ENCODE measurements at regions of chr17 and their contacts with region 1.

Region 1: DNA sequence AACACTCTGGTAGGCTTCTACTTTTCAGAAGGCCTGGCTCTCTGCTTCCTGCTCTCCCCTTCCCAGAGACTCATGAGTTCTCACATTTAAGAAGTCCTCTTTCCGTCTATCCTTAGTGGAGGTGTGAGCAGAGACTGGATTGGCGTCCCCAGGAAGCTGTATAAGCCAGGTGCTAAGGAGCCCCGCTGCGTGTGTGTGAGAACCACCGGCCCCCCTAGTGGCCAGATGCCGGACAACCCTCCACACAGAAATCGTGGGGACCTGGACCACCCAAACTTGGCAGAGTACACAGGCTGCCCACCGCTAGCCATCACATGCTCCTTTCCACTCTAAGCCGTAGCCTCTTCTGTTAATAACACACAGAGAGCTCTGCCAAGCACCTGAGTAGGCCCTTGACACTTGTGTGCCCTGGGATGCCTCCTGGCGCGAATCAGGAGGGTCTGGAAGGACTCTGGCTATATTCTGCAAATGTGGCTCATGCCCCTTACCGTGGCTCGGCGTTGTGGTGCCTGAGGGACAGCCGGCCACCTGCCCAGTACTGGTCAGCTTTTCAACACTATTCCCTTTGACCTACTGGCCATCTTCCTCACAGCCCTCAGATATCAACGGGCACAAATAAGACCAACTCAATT is 13.9 kb downstream of the CYB5D2 start:
- DNase-seq: no peak
- ATAC-seq: no peak
- H3K4me3 ChIP-seq: no peak overlapping the region
- H3K27ac ChIP-seq: 0 out of 2 replicates have a peak overlapping the region, but pooled peaks have one; percentile 39
- H3K4me1 ChIP-seq: peaks cover 26% of the 10 kb centered on the region
- H3K27me3 ChIP-seq: no peaks in the 10 kb centered on the region
- CTCF ChIP-seq: no peak; the same call in 1 of the 2 replicates

Region 2: GRCh38 chr17:4426499-4427208 is 269.8 kb after region 1 on chr17:
- CTCF ChIA-PET with region 1: no interaction called
- POLR2A ChIA-PET with region 1: interaction called, 10 read pairs
- in situ Hi-C with region 1: no loop called
- intact Hi-C with region 1: no loop called
- DNase-seq: no peak
- ATAC-seq: no peak
- H3K4me3 ChIP-seq: no peak overlapping the region
- H3K27ac ChIP-seq: no peak overlapping the region
- H3K4me1 ChIP-seq: no peaks in the 10 kb centered on the region
- H3K27me3 ChIP-seq: no peaks in the 10 kb centered on the region
- CTCF ChIP-seq: no peak

Measured in Panc1 (cell line).